RWPE1 (cell line): ENCODE measurements at regions of chr4 and their contacts with region 1.

Region 1: GRCh38 chr4:7872264-7872771 is 67.3 kb downstream of the AFAP1 start:
- DNase-seq: no peak
- H3K27ac ChIP-seq: peak overlapping the region; percentile 74
- CTCF ChIP-seq: no peak

Region 2: GRCh38 chr4:7857238-7857701 is 15.0 kb before region 1 on chr4:
- CTCF ChIA-PET with region 1: no interaction called
- POLR2A ChIA-PET with region 1: no interaction called
- DNase-seq: no peak
- H3K27ac ChIP-seq: no peak overlapping the region
- CTCF ChIP-seq: no peak

Region 3: DNA sequence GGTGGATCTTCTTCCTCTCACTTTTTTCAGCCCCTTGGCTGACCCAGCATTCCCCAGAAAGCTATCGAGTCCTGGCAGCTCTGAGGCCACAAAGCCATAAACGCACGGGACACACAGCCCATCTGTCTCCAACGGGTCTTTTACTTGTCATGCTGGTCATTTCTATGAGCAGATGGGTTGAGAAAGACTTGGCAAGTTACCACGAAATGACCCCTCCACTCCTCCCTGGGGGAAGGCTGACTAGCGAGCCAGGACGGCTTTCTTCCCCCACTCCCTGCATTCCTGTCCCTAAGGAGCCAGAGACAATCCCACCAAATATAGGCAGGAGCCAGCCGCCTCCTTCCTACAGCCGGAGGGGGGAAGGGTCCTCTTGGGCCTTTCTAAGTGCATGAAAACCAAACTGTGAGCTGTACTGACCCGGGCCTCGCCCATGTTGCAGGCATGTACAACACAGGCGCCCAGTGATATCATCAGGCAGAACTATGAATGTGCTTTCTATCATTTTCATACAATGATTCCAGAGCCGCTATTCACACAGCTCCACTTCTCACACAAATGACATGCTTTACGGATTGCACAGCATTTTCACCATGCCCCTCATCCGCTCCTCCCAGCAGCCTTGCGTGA is 38.7 kb after region 1 on chr4:
- CTCF ChIA-PET with region 1: no interaction called
- POLR2A ChIA-PET with region 1: interaction called, 13 read pairs
- DNase-seq: no peak
- H3K27ac ChIP-seq: peak overlapping the region; percentile 34
- CTCF ChIP-seq: no peak